Left colon (tissue), 2 donors: ENCODE measurements at regions of chr1 and their contacts with region 1.

Region 1: GRCh38 chr1:66242646-66243547 is 291.1 kb upstream of the SGIP1 start:
- DNase-seq: peak; percentile 78 to 89
- ATAC-seq: peak; percentile 100

Region 2: GRCh38 chr1:65958561-65959350 is 284.1 kb before region 1 on chr1:
- intact Hi-C with region 1: loop called (anchors 2 to 5 kb)
- DNase-seq: no peak
- ATAC-seq: peak; percentile 41

Region 3: GRCh38 chr1:66452162-66452561 is 209.3 kb after region 1 on chr1:
- intact Hi-C with region 1: loop called in 1 of 2 experiments (anchors 10 kb)
- DNase-seq: no peak
- ATAC-seq: no peak